ENCODE measurements at regions of chr2 and their contacts with region 1.

Region 1: DNA sequence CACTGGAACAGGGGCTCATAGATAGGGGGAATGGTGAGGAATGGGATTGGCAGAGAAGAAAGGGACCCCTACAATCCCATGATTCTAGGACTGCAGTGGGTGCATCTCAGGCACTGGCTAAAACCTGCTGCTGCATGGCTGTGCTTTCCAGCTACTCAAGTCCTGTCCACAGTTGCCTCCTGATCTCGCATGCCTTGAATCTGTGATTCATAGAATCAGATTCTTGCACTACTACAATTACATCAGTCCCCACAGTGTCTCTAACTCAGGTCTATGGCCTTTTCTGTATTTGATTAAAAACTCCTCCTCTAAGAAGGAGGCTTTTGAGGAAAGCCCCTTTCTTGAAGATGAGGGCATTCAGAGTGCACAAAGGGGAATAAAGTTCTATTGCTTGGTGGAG is 117.4 kb downstream of the LRATD1 start:
- DNase-seq: no peak

Region 2: DNA sequence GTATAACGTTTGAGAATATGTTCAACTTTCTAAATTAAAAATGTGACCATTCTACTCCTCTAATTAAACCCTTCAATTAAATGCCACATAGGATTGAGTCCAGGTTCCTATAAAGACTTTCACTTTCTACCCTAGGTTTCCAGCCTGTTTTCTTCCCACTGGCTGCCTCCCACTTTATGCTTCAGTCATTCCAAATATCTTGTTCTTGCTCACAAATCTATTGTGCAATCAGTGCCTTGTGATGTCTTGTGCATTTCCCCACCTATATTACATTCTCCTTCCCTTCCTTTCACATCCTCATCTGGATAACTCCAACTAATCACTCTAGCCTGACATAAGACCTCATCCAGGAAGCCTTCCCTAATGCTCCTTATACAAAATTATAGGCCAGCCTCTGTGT is 399.0 kb before region 1 on chr2:
- intact Hi-C with region 1: loop called in 1 of 2 experiments (anchors 10 kb)
- DNase-seq: no peak

Measured in posterior vena cava (tissue), 2 donors.